Activated CD4-positive, alpha-beta memory T cell treated with anti-CD3 and anti-CD28 coated beads for 36 hours (primary cell): ENCODE measurements at regions of chr22 and their contacts with region 1.

Region 1: GRCh38 chr22:36977947-36978660 is 41.1 kb downstream of the TST start:
- DNase-seq: peak; percentile 94
- H3K4me3 Mint-ChIP-seq: peak overlapping the region; percentile 78
- H3K27ac Mint-ChIP-seq: peak overlapping the region; percentile 2
- H3K4me1 Mint-ChIP-seq: peaks cover 5% of the 10 kb centered on the region
- H3K27me3 Mint-ChIP-seq: no peaks in the 10 kb centered on the region

Region 2: DNA sequence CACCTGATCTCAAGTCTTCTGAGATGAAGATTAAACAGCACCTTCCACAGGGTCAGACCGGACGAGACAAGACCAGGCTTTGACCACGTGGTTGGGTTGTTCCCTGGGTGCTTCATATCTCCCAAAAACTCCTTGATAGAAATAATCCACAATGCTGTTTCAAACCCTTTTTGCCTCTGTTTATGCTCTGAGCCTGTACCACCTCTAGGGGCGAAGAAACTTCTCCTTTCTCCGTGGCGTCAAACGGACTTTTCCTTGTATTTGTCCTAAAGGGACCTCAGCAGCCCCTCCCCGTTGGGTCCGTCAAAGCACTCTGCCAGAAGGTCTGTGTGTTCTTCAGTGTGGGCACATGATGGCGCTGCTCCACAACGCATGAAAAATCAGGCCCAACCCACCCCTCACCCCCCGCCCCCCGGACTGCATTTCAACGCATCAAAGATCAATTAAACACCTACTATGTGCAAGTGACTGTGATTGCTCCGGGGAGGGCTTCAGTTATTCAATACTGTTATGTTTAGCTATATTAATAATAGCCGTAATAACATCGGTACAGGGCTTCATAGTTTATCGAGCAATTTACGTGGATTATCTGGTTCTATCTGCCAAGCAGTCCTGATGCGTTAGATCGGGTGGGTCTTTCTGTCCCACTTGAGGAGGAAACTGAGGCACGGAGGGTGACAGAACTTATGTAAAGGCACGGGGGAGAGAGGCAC is 431.9 kb before region 1 on chr22:
- CTCF ChIA-PET with region 1: interaction called, 7 read pairs
- POLR2A ChIA-PET with region 1: no interaction called
- intact Hi-C with region 1: loop called (anchors 5 kb)
- DNase-seq: peak; percentile 57
- H3K4me3 Mint-ChIP-seq: no peak overlapping the region
- H3K27ac Mint-ChIP-seq: no peak overlapping the region
- H3K4me1 Mint-ChIP-seq: peaks cover 16% of the 10 kb centered on the region
- H3K27me3 Mint-ChIP-seq: peaks cover 10% of the 10 kb centered on the region

Region 3: GRCh38 chr22:36775964-36776669 is 202.0 kb before region 1 on chr22 and contains the start of gene IFT27:
- CTCF ChIA-PET with region 1: interaction called, 10 read pairs
- POLR2A ChIA-PET with region 1: interaction called, 8 read pairs
- intact Hi-C with region 1: no loop called
- DNase-seq: peak; percentile 99
- H3K4me3 Mint-ChIP-seq: peak within 1 kb of the TSS; percentile 84
- H3K27ac Mint-ChIP-seq: peak within 1 kb of the TSS; percentile 90
- H3K4me1 Mint-ChIP-seq: peaks cover 30% of the 10 kb centered on the region
- H3K27me3 Mint-ChIP-seq: no peaks in the 10 kb centered on the region
- total RNA-seq, gene IFT27: 27.9 to 32.1 TPM

Region 4: GRCh38 chr22:36787204-36787988 is 190.7 kb before region 1 on chr22:
- CTCF ChIA-PET with region 1: interaction called, 58 read pairs
- POLR2A ChIA-PET with region 1: no interaction called
- intact Hi-C with region 1: loop called (anchors 1 kb)
- DNase-seq: no peak
- H3K4me3 Mint-ChIP-seq: no peak overlapping the region
- H3K27ac Mint-ChIP-seq: no peak overlapping the region
- H3K4me1 Mint-ChIP-seq: peaks cover 10% of the 10 kb centered on the region
- H3K27me3 Mint-ChIP-seq: peaks cover 4% of the 10 kb centered on the region

Region 5: GRCh38 chr22:36966851-36967540 is 11.1 kb before region 1 on chr22:
- CTCF ChIA-PET with region 1: interaction called, 30 read pairs
- POLR2A ChIA-PET with region 1: no interaction called
- intact Hi-C with region 1: no loop called
- DNase-seq: no peak
- H3K4me3 Mint-ChIP-seq: no peak overlapping the region
- H3K27ac Mint-ChIP-seq: no peak overlapping the region
- H3K4me1 Mint-ChIP-seq: no peaks in the 10 kb centered on the region
- H3K27me3 Mint-ChIP-seq: no peaks in the 10 kb centered on the region

Region 6: DNA sequence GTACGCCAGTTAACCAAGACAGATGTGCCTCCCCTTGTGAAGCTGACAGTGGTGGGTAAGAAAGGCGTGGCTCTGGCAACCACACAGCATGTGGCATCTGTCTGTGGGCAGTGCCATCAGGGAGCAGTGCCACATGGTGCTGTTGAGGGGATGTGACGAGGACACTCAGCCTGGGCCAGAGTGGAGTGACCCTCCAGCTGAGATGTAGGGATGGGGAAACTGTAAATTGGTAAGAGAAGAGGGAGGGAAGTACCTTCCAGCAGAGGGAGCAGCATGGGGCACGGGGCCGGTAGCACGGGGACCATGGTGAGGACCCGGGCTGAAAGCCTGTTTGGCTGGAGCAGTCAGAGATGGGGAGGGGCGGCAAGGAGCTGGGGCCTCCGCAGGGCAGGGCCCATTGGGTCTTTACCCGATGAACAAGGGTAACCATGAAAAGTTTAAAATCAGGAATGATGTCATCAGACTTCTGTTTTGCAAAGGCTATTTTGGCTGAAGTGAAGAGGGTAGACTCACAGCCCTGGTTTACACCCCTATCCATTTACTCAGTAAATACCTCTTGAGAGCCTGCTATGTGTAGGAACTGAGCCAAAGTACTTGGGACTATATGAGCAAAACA is 121.0 kb after region 1 on chr22:
- CTCF ChIA-PET with region 1: no interaction called
- POLR2A ChIA-PET with region 1: no interaction called
- intact Hi-C with region 1: no loop called
- DNase-seq: peak; percentile 22
- H3K4me3 Mint-ChIP-seq: no peak overlapping the region
- H3K27ac Mint-ChIP-seq: no peak overlapping the region
- H3K4me1 Mint-ChIP-seq: peaks cover 38% of the 10 kb centered on the region
- H3K27me3 Mint-ChIP-seq: peaks cover 2% of the 10 kb centered on the region